GM12878 (cell line): ENCODE measurements at regions of chr13 and their contacts with region 1.

Region 1: DNA sequence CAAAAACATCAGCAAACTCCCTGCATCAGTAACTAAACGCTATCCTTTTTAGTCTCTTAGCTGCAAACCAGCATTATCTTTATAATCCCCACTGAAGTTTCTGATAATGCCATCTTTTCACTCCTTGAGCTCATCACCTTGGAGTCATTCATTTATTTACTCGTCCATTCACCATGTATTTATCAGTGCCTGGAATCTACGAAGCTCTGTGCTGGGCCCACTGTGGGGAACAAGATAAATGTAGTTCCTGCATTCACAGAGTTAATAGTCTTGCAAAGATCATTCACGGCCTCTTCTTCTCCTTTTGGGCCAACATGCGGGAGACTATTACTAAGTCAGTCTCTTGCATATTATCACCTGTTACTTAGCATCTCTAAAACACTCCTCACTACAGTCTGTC is 89.4 kb downstream of the HS6ST3 start:
- DNase-seq: no peak
- ATAC-seq: no peak
- H3K4me3 ChIP-seq: no peak overlapping the region
- H3K27ac ChIP-seq: no peak overlapping the region
- H3K4me1 ChIP-seq: no peaks in the 10 kb centered on the region
- H3K27me3 ChIP-seq: no peaks in the 10 kb centered on the region
- CTCF ChIP-seq: no peak
- EP300 ChIP-seq: no peak
- POLR2A ChIP-seq: no peak
- RAD21 ChIP-seq: no peak

Region 2: DNA sequence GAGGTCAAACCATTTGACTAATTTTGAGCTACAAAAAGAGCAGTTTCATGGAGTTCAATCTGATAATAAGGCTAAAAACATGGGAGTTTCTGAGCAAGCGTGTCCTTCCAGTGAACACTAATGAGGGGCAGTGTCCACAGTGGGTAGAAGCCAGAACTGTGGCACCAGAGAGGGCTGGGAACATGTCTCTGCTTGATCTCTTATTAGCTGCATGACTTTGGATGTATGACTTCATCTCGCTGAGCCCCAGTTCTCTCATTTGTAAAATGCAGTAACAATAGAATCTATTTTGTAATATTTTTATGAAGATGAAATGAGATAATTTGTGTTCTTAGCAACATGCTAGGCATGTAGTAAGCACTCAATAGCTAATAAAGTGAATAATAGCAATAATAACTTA is 19.6 kb before region 1 on chr13:
- CTCF ChIA-PET with region 1: no interaction called
- POLR2A ChIA-PET with region 1: no interaction called
- RAD21 ChIA-PET with region 1: no interaction called
- SMC1A ChIA-PET with region 1: no interaction called
- in situ Hi-C with region 1: no loop called
- intact Hi-C with region 1: loop called (anchors 1 kb)
- DNase-seq: no peak
- ATAC-seq: no peak
- H3K4me3 ChIP-seq: no peak overlapping the region
- H3K27ac ChIP-seq: no peak overlapping the region
- H3K4me1 ChIP-seq: no peaks in the 10 kb centered on the region
- H3K27me3 ChIP-seq: no peaks in the 10 kb centered on the region; a peak in 2 of 4 replicates
- CTCF ChIP-seq: no peak
- EP300 ChIP-seq: no peak
- POLR2A ChIP-seq: no peak
- RAD21 ChIP-seq: no peak